CD4-positive, alpha-beta memory T cell (primary cell): ENCODE measurements at regions of chr6 and their contacts with region 1.

Region 1: DNA sequence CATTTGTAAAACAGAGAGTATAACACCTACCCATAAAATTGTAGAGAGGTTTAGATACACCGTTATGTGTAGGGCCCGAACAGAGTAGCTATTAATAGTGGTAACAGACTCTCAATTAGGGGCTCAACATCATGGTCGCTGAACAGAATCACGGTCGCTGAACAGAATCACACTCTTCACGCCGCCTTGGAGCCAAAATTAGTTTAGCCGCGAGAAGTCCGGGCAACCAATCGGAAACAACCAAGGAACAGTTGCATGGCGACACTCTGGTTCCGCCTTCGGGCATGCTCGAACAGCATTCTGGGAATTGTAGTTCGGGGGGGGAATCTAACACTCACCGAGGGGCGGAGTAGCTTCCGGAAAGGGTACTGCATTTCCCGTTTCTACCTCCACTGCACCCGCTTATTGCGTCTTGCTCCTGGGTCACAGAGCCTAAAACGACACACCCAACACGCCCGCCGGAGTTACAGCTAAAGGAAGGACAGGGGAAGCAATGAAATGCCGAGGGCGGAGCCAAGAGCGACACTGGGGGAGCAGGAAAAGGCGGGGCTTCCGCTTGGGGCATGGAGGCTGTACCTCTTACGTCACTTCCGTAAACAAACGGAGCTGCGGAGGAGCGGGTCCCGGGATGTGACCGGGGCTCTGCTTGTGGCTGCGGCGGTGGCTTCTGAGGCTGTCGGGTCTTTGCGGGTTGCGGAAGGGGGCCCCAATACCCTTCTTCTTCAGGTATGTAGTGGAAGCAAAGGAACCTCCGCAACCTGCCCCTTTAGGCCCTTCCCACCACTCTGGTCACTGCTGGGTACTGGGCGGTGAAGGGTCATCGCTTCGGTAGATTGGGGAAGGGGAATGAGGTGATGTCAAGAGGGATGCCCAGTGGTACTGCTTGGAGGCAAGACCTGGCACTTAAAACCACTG is at the start of gene CCDC28A:
- DNase-seq: peak; percentile 96 to 98 (median 97)
- H3K4me3 ChIP-seq: peak within 1 kb of the TSS; percentile 72 to 99
- H3K4me3 Mint-ChIP-seq: peak within 1 kb of the TSS; percentile 91 to 100 (median 99)
- H3K27ac ChIP-seq: peak within 1 kb of the TSS; percentile 90
- H3K27ac Mint-ChIP-seq: peak within 1 kb of the TSS; percentile 97 to 100 (median 100)
- H3K4me1 ChIP-seq: peaks cover 18% of the 10 kb centered on the region
- H3K4me1 Mint-ChIP-seq: peaks cover 12 to 46% (median 26%) of the 10 kb centered on the region in 4 donors
- H3K27me3 ChIP-seq: no peaks in the 10 kb centered on the region
- H3K27me3 Mint-ChIP-seq: peaks cover 0 to 3% of the 10 kb centered on the region in 2 donors
- total RNA-seq, gene CCDC28A: 32.4 to 33.9 TPM

Region 2: DNA sequence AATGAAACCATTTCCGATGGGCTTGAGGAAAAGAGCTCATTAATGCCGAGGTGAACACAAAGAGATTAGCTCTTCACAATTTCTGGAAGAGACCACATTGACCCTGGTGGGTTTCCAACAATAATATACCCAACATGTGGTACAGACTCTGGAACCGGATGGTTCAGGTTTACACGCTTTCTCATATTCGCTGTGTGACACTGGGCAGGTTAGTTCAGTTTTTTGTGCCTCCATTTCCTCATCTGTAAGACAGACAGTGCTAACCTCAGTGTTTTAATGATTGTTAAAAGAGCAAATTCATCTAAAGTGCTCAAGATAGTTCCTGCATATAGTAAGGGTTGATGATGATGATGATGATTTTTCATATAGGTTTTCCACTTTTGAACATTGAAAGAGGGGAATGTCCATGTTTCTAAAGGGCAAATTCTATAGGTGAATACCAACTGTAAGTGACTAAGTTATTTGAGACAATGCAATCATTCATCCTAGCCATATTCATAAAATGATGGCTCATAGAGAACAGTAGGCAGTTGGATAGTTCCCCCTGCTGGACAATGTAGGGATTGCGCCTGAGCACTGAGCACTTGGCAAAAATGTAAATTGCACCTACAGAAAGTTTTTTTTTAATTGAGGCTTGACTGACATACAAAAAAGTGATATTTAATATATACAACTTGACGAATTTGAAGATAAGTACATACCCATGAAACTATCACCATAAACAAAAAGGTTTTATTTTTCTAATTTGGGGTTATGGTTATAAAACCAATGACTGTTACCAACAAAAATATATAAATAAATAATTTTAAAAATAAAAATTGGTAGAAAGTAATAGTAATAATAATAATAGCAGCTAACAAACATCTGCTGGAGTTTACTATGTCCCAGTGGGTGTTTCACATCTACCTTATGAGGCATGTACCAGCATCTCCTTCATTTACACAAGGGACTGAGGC is 664.1 kb before region 1 on chr6:
- CTCF ChIA-PET with region 1: interaction called, 3 read pairs
- POLR2A ChIA-PET with region 1: no interaction called
- intact Hi-C with region 1: loop called (anchors 5 kb)
- DNase-seq: peak; percentile 69 to 75 (median 75)
- H3K4me3 ChIP-seq: no peak overlapping the region
- H3K4me3 Mint-ChIP-seq: peak overlapping the region in 2 of 8 donors; percentile 52 to 55
- H3K27ac ChIP-seq: no peak overlapping the region
- H3K27ac Mint-ChIP-seq: peak overlapping the region in 3 of 7 donors; percentile 8 to 65 (median 11)
- H3K4me1 ChIP-seq: peaks cover 25% of the 10 kb centered on the region
- H3K4me1 Mint-ChIP-seq: peaks cover 16 to 37% (median 17%) of the 10 kb centered on the region in 4 donors
- H3K27me3 ChIP-seq: no peaks in the 10 kb centered on the region
- H3K27me3 Mint-ChIP-seq: peaks cover 3% of the 10 kb centered on the region in 2 donors

Region 3: GRCh38 chr6:138455746-138456400 is 317.6 kb before region 1 on chr6:
- CTCF ChIA-PET with region 1: no interaction called
- POLR2A ChIA-PET with region 1: interaction called, 10 read pairs
- intact Hi-C with region 1: loop called (anchors 1 kb)
- DNase-seq: peak; percentile 57 to 81 (median 74)
- H3K4me3 ChIP-seq: peak overlapping the region; percentile 12 to 47
- H3K4me3 Mint-ChIP-seq: peak overlapping the region; percentile 57 to 87 (median 72)
- H3K27ac ChIP-seq: peak overlapping the region; percentile 41
- H3K27ac Mint-ChIP-seq: peak overlapping the region; percentile 85 to 96 (median 89)
- H3K4me1 ChIP-seq: peaks cover 26% of the 10 kb centered on the region
- H3K4me1 Mint-ChIP-seq: peaks cover 13 to 37% (median 24%) of the 10 kb centered on the region in 4 donors
- H3K27me3 ChIP-seq: no peaks in the 10 kb centered on the region
- H3K27me3 Mint-ChIP-seq: no peaks in the 10 kb centered on the region

Region 4: GRCh38 chr6:138609801-138610430 is 163.5 kb before region 1 on chr6:
- CTCF ChIA-PET with region 1: no interaction called
- POLR2A ChIA-PET with region 1: no interaction called
- intact Hi-C with region 1: no loop called
- DNase-seq: no peak
- H3K4me3 ChIP-seq: no peak overlapping the region
- H3K4me3 Mint-ChIP-seq: no peak overlapping the region
- H3K27ac ChIP-seq: no peak overlapping the region
- H3K27ac Mint-ChIP-seq: no peak overlapping the region
- H3K4me1 ChIP-seq: no peaks in the 10 kb centered on the region
- H3K4me1 Mint-ChIP-seq: no peaks in the 10 kb centered on the region
- H3K27me3 ChIP-seq: no peaks in the 10 kb centered on the region
- H3K27me3 Mint-ChIP-seq: peaks cover 2 to 5% of the 10 kb centered on the region in 2 donors

Region 5: GRCh38 chr6:138682704-138683527 is 90.5 kb before region 1 on chr6:
- CTCF ChIA-PET with region 1: no interaction called
- POLR2A ChIA-PET with region 1: no interaction called
- intact Hi-C with region 1: no loop called
- DNase-seq: no peak
- H3K4me3 ChIP-seq: no peak overlapping the region
- H3K4me3 Mint-ChIP-seq: no peak overlapping the region
- H3K27ac ChIP-seq: no peak overlapping the region
- H3K27ac Mint-ChIP-seq: no peak overlapping the region
- H3K4me1 ChIP-seq: no peaks in the 10 kb centered on the region
- H3K4me1 Mint-ChIP-seq: no peaks in the 10 kb centered on the region
- H3K27me3 ChIP-seq: no peaks in the 10 kb centered on the region
- H3K27me3 Mint-ChIP-seq: peaks cover 0 to 3% of the 10 kb centered on the region in 2 donors

Region 6: GRCh38 chr6:139028658-139029469 is 255.4 kb after region 1 on chr6 and contains the start of gene ABRACL:
- CTCF ChIA-PET with region 1: no interaction called
- POLR2A ChIA-PET with region 1: interaction called, 4 read pairs
- intact Hi-C with region 1: loop called (anchors 2 kb)
- DNase-seq: peak; percentile 74 to 88 (median 75)
- H3K4me3 ChIP-seq: peak within 1 kb of the TSS; percentile 59 to 97
- H3K4me3 Mint-ChIP-seq: peak within 1 kb of the TSS in 5 of 8 donors; percentile 93 to 98 (median 95)
- H3K27ac ChIP-seq: peak within 1 kb of the TSS; percentile 88
- H3K27ac Mint-ChIP-seq: peak within 1 kb of the TSS; percentile 88 to 98 (median 92)
- H3K4me1 ChIP-seq: peaks cover 46% of the 10 kb centered on the region
- H3K4me1 Mint-ChIP-seq: peaks cover 22 to 34% (median 28%) of the 10 kb centered on the region in 4 donors
- H3K27me3 ChIP-seq: no peaks in the 10 kb centered on the region
- H3K27me3 Mint-ChIP-seq: no peaks in the 10 kb centered on the region
- total RNA-seq, gene ABRACL: 103 to 112 TPM

Region 7: GRCh38 chr6:139323511-139324300 is 550.3 kb after region 1 on chr6:
- CTCF ChIA-PET with region 1: no interaction called
- POLR2A ChIA-PET with region 1: interaction called, 6 read pairs
- intact Hi-C with region 1: loop called (anchors 1 kb)
- DNase-seq: peak; percentile 86 to 91 (median 89)
- H3K4me3 ChIP-seq: peak overlapping the region; percentile 33 to 61
- H3K4me3 Mint-ChIP-seq: peak overlapping the region; percentile 78 to 92 (median 88)
- H3K27ac ChIP-seq: peak overlapping the region; percentile 87
- H3K27ac Mint-ChIP-seq: peak overlapping the region; percentile 98 to 100 (median 98)
- H3K4me1 ChIP-seq: peaks cover 35% of the 10 kb centered on the region
- H3K4me1 Mint-ChIP-seq: peaks cover 21 to 43% (median 34%) of the 10 kb centered on the region in 4 donors
- H3K27me3 ChIP-seq: no peaks in the 10 kb centered on the region
- H3K27me3 Mint-ChIP-seq: no peaks in the 10 kb centered on the region